Psoas muscle (tissue), 8 donors: ENCODE measurements at regions of chr11 and their contacts with region 1.

Region 1: DNA sequence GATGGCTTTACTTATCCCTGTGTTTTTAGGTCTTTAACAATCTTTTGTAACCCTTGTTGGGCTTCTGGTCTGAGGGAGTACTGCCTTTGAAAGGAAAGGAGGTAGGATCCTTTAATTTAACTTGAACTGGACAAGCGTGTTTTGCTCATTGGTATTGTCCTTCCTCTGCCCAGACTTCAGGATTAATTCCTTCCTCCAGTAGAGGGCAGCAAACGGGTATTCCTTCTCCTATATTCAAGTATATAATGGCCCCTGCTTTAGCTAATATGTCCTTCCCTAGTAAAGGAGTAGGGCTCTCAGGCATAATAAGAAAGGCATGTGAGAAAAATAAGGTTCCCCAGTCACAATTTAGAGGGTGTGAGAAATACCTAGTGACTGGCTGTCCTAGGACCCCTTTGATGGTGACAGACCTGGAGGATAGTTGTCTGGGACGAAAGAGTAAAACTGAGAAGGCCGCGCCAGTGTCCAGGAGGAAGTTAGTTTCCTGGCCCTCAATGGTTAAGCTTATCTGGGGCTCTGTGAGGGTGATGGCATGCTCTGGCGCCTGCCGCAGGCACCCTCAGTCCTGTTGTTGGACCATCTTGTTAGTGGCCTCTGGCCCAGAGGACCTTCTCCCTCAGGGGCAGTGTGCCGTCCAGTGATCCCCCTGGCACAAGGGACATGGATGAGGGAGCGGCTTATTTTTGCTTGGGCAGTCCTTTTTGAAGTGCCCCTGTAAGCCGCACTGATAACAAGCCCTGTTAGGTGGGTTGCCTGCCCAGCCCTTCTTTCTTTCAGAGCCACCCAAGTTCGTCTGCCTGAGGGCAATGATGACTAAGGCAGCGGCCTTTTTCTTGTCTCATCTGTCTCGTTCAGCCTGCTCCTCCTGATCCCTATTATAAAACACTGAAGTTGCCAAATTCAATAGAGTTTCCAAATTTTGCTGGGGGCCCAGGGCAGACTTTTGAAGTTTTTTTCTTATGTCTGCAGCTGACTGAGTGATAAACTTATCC is 51.8 kb downstream of the C11orf71 start:
- DNase-seq: no peak
- ATAC-seq: peak in 2 of 4 donors; percentile 68 to 75
- H3K4me3 ChIP-seq: no peak overlapping the region
- H3K27ac ChIP-seq: no peak overlapping the region
- H3K4me1 ChIP-seq: no peaks in the 10 kb centered on the region
- H3K27me3 ChIP-seq: no peaks in the 10 kb centered on the region
- CTCF ChIP-seq: peak; percentile 54

Region 2: GRCh38 chr11:114099392-114100178 is 248.9 kb before region 1 on chr11:
- intact Hi-C with region 1: no loop called
- DNase-seq: peak in 1 of 2 donors; percentile 63
- ATAC-seq: peak; percentile 75 to 89 (median 84)
- H3K4me3 ChIP-seq: peak overlapping the region; percentile 45
- H3K27ac ChIP-seq: peak overlapping the region; percentile 99
- H3K4me1 ChIP-seq: peaks cover 94% of the 10 kb centered on the region
- H3K27me3 ChIP-seq: no peaks in the 10 kb centered on the region
- CTCF ChIP-seq: no peak

Region 3: GRCh38 chr11:114275280-114275679 is 73.2 kb before region 1 on chr11:
- intact Hi-C with region 1: no loop called
- DNase-seq: peak; percentile 67
- ATAC-seq: peak in 3 of 4 donors; percentile 28 to 64 (median 34)
- H3K4me3 ChIP-seq: no peak overlapping the region
- H3K27ac ChIP-seq: no peak overlapping the region
- H3K4me1 ChIP-seq: no peaks in the 10 kb centered on the region
- H3K27me3 ChIP-seq: peaks cover 0 to 8% (median 0%) of the 10 kb centered on the region in 3 donors
- CTCF ChIP-seq: no peak

Region 4: DNA sequence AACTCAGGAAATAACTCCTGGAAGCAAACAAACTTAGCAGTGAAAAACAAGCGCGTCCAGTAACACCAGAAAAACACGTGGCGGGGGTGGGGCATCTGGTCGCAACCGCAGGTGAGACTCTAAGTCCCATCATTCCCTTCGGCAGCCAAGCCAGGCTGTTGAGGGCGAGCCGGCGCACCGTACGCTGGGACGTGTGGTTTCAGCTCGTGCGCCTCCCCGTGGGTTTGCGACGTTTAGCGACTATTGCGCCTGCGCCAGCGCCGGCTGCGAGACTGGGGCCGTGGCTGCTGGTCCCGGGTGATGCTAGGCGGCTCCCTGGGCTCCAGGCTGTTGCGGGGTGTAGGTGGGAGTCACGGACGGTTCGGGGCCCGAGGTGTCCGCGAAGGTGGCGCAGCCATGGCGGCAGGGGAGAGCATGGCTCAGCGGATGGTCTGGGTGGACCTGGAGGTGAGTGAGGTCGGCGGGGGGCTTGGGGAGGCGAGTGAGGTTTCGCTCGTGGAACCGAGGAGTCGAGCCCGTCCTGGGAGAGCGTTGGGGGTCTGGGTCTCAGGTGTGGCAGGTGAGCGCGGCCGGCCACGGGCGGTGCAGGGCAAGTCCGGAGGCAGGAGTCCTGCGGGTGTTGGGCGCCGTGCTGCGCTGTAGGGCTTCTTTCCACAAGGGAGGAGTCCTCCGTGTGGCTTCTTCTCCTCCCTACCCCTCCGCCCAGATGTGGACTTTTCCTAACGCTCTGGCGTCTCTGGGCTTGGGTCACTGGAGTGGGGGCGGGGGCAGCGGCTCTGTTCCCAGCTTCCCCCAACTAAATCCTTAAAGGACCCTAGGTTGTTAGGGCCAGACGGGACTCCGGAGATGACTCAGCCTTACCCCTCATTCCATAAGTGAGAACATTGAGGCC is 91.0 kb after region 1 on chr11 and contains the start of gene REXO2:
- intact Hi-C with region 1: loop called in 1 of 2 experiments (anchors 2 kb)
- DNase-seq: peak; percentile 95 to 98
- ATAC-seq: peak; percentile 96 to 98 (median 98)
- H3K4me3 ChIP-seq: peak within 1 kb of the TSS; percentile 92
- H3K27ac ChIP-seq: peak within 1 kb of the TSS; percentile 85
- H3K4me1 ChIP-seq: peaks cover 23% of the 10 kb centered on the region
- H3K27me3 ChIP-seq: no peaks in the 10 kb centered on the region
- CTCF ChIP-seq: peak; percentile 23
- total RNA-seq, gene REXO2: 44.1 to 77.4 (median 61.9) TPM